ENCODE measurements at regions of chr6 and their contacts with region 1.

Region 1: DNA sequence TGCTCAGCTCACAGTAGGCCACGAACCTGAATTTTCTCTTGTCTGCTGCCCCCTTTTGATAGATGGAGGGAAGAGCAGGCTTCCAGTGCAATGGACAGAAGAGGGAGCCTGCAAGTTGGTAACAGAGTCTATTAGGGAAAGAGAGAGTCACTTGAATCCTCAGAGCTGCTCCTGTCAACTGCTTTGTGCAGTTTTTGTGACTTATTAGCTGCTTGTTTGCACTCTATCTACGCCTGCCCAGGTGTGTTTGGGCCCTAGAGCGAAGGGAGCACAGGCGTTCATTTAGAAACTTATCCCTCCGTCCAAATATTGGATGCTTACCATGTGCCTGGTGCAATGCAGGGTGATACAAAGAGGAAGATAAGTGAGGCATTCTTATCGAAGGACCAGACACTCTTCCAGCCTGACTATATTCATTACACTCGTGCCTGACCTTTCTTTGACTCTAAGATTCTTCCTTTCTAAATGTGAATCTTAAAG is 11.6 kb upstream of the SLC2A12 start:
- DNase-seq: peak; percentile 73
- H3K4me3 Mint-ChIP-seq: no peak overlapping the region
- H3K27ac Mint-ChIP-seq: no peak overlapping the region
- H3K4me1 Mint-ChIP-seq: peaks cover 11% of the 10 kb centered on the region
- H3K27me3 Mint-ChIP-seq: no peaks in the 10 kb centered on the region
- CTCF ChIP-seq: peak; percentile 84

Region 2: DNA sequence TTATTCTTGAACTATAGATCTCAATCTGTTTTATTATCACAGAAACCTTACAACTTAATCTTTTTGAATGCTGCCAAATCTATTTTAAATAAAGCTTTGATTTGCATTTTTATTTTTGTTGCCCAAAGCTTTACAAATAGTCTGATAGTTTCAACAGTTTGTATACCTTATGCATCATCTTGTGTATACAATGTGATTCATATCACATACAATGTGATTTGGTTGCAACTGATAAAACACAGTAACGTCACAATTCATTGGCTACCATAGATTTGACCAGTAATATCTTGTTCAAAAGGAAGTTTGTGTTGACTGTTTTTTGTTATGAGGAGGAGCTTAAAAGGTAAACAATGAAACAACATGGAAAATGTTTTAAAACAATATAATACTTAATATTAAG is 712.0 kb before region 1 on chr6:
- CTCF ChIA-PET with region 1: no interaction called
- POLR2A ChIA-PET with region 1: no interaction called
- intact Hi-C with region 1: no loop called
- DNase-seq: no peak
- H3K4me3 Mint-ChIP-seq: no peak overlapping the region
- H3K27ac Mint-ChIP-seq: no peak overlapping the region
- H3K4me1 Mint-ChIP-seq: no peaks in the 10 kb centered on the region
- H3K27me3 Mint-ChIP-seq: peaks cover 93% of the 10 kb centered on the region
- CTCF ChIP-seq: no peak

Region 3: DNA sequence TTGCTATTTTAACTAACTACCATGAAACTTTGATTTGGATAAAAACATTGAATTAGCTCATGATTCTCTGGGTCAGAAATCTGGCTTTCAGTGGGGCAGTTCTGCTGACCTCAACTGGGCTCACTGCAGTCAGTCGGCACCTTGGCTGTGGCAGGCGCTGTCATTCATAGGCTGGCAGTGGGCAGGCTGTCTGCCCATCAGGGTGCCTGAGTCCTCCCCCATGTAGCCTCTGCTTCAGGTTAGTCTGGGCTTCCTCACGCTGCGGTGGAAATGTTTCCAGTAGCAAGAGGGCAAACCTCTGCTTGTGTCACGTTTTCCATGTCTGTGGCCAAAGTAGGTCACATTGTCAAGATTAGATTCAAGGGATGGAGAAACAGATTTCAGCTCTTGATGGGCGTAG is 426.1 kb before region 1 on chr6:
- CTCF ChIA-PET with region 1: no interaction called
- POLR2A ChIA-PET with region 1: no interaction called
- intact Hi-C with region 1: no loop called
- DNase-seq: no peak
- H3K4me3 Mint-ChIP-seq: no peak overlapping the region
- H3K27ac Mint-ChIP-seq: no peak overlapping the region
- H3K4me1 Mint-ChIP-seq: peaks cover 17% of the 10 kb centered on the region
- H3K27me3 Mint-ChIP-seq: no peaks in the 10 kb centered on the region
- CTCF ChIP-seq: no peak

Region 4: GRCh38 chr6:133945158-133945557 is 118.8 kb before region 1 on chr6:
- CTCF ChIA-PET with region 1: interaction called, 19 read pairs
- POLR2A ChIA-PET with region 1: no interaction called
- intact Hi-C with region 1: no loop called
- DNase-seq: peak; percentile 27
- H3K4me3 Mint-ChIP-seq: no peak overlapping the region
- H3K27ac Mint-ChIP-seq: no peak overlapping the region
- H3K4me1 Mint-ChIP-seq: no peaks in the 10 kb centered on the region
- H3K27me3 Mint-ChIP-seq: no peaks in the 10 kb centered on the region
- CTCF ChIP-seq: no peak

Region 5: GRCh38 chr6:133966654-133967329 is 97.2 kb before region 1 on chr6:
- CTCF ChIA-PET with region 1: interaction called, 72 read pairs
- POLR2A ChIA-PET with region 1: interaction called, 3 read pairs
- intact Hi-C with region 1: no loop called
- DNase-seq: no peak
- H3K4me3 Mint-ChIP-seq: no peak overlapping the region
- H3K27ac Mint-ChIP-seq: no peak overlapping the region
- H3K4me1 Mint-ChIP-seq: peaks cover 39% of the 10 kb centered on the region
- H3K27me3 Mint-ChIP-seq: no peaks in the 10 kb centered on the region
- CTCF ChIP-seq: no peak

Region 6: DNA sequence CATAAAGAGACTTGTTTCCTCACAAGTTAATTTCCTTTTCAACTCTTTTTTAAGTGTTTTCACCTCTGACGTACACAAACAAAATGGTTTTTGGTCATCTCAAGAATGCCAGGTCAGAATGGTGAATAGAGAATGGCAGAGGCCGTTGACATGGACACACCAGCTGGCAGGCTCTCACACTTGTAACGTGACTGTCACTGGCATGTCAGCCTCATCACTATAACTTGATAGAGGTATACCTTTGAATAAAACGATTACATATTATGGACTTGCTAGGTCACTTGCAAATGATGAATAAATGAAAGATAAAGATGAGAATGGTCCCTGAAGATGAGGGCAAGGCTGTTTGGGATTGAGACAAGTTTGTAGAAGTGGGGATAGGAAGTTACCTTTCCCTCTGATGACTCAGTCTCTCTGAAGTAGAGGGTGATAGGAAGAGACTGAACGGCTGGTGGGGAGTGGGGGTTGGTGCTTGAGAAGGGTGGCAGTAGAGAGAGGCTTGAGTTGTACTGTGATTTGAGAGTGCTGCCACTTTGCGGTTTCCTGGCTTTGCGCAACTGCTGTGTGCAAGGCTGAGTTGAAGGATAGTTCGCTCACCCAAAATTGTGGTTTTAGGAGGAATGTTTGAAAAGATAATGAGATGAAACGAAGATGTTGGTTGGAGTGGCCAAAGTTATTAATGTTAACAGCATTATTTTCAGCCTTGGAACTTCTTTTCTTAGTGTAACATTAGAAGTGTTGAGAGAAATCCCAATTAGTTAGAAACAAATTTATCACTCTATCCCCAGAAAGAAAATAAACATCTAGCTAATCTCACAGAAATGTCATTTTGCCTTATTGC is 80.7 kb before region 1 on chr6:
- CTCF ChIA-PET with region 1: interaction called, 84 read pairs
- POLR2A ChIA-PET with region 1: interaction called, 35 read pairs
- intact Hi-C with region 1: no loop called
- DNase-seq: peak; percentile 80
- H3K4me3 Mint-ChIP-seq: no peak overlapping the region
- H3K27ac Mint-ChIP-seq: no peak overlapping the region
- H3K4me1 Mint-ChIP-seq: peaks cover 20% of the 10 kb centered on the region
- H3K27me3 Mint-ChIP-seq: no peaks in the 10 kb centered on the region
- CTCF ChIP-seq: no peak

Region 7: DNA sequence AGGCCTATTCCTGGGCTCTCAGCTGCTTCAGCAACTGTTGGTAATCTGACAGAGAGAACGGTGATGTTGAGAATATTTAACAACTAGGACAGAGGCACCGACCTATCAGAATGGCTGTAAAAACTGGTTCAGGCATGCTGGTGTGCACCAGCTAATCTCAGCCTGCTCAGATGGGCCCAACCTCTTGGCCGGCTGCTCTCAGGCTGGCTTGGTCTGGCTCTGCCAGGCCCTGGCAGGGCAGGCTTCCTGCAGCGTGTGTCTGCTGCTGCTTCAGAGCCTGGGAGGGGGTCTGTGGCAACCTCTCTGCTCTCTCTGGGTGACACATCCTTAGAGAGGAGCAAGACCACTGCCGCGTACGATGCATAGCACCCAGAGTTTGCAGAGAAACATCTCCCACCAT is 16.3 kb before region 1 on chr6:
- CTCF ChIA-PET with region 1: interaction called, 43 read pairs
- POLR2A ChIA-PET with region 1: interaction called, 12 read pairs
- intact Hi-C with region 1: no loop called
- DNase-seq: no peak
- H3K4me3 Mint-ChIP-seq: no peak overlapping the region
- H3K27ac Mint-ChIP-seq: no peak overlapping the region
- H3K4me1 Mint-ChIP-seq: peaks cover 4% of the 10 kb centered on the region
- H3K27me3 Mint-ChIP-seq: no peaks in the 10 kb centered on the region
- CTCF ChIP-seq: no peak

Region 8: DNA sequence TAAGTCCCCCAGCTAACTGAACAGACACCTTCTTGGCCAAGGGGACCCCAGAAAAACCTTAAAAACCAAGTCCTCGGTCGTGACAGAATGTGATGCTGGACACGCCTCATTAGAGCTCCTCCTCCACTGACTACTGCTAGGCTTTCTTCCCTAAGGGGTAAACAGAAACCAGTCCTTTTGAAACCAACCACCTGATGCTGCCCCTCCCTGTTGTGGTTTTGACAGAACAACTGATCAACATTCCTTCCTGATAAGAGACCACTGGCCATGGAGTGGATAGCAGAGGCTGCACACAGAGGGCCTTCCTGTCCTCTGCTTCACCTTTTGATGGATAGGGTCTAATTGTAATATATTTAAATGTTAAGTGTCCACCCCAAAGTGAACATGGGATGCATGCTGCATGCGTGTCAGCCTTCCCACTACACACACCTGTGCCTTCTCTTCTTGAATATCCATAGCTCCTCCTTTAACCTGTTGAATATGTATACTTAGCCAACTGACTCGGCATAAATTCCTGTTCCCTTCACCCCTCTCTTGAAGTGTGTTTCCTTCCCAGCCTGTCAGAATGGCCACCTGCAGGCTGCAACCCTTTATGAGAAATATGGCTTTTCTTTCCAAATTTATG is 16.3 kb after region 1 on chr6:
- CTCF ChIA-PET with region 1: interaction called, 28 read pairs
- POLR2A ChIA-PET with region 1: interaction called, 4 read pairs
- intact Hi-C with region 1: no loop called
- DNase-seq: peak; percentile 17
- H3K4me3 Mint-ChIP-seq: no peak overlapping the region
- H3K27ac Mint-ChIP-seq: no peak overlapping the region
- H3K4me1 Mint-ChIP-seq: peaks cover 14% of the 10 kb centered on the region
- H3K27me3 Mint-ChIP-seq: no peaks in the 10 kb centered on the region
- CTCF ChIP-seq: no peak

Region 9: GRCh38 chr6:134196568-134197193 is 132.7 kb after region 1 on chr6:
- CTCF ChIA-PET with region 1: no interaction called
- POLR2A ChIA-PET with region 1: no interaction called
- intact Hi-C with region 1: no loop called
- DNase-seq: no peak
- H3K4me3 Mint-ChIP-seq: no peak overlapping the region
- H3K27ac Mint-ChIP-seq: no peak overlapping the region
- H3K4me1 Mint-ChIP-seq: no peaks in the 10 kb centered on the region
- H3K27me3 Mint-ChIP-seq: no peaks in the 10 kb centered on the region
- CTCF ChIP-seq: no peak